Activated T-helper 2 cell treated with anti-CD3 and anti-CD28 coated beads, Interferon-gamma antibody, Interleukin-2, Interleukin-4, amounts not matched to agents 10 μg/mL and 5 μg/mL and 100 μg/mL, durations not matched to agents 14 hours and 24 hours and 36 hours (primary cell): ENCODE measurements at regions of chr2 and their contacts with region 1.

Region 1: DNA sequence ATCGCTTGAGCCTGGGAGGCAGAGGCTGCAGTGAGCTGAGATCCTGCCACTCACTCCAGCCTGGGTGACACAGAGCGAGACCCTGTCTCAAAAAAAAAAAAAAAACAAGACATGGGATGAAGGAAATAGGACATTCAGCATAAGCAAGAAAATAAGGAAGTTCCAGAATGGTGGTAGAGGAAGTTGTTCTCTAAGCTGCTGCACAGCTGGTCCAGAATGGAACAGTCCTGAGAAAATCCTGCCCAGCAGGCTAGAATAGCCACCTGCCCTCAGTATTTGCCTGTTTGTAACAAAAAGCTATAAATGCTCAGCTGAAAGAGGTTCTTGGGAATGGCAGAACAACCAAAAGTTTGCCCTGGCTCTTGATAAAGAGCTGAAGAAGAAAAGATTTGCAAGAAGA is 11.1 kb upstream of the MAPRE3 start:
- DNase-seq: no peak
- H3K4me3 Mint-ChIP-seq: no peak overlapping the region
- H3K27ac Mint-ChIP-seq: no peak overlapping the region
- H3K4me1 Mint-ChIP-seq: no peaks in the 10 kb centered on the region
- H3K27me3 Mint-ChIP-seq: peaks cover 29% of the 10 kb centered on the region

Region 2: DNA sequence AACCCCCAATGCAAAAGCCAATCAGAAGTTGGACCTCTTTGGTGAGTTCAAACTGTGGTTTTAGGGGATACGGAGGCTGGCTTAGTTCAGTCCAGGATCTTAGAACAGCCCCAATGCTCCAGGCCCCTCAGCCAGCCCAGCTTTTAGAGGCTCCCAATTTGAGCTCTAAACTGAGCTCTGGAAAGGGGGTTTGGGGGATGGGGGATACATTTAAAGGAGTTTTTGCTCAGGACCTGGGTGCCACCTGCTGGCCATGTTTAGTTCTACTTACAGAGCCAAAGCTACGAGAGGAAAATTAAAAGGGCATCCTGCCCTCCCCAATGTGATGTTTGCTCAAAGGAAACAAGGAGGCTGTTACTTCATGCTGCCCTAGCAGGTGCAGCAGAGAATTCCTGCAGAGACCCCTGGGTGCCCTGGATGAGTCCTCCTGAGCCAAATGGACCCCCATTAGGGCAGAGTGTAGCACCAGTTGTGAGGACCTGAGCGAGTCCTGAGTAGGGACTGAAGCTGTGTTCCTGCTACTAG is 57.5 kb after region 1 on chr2:
- intact Hi-C with region 1: loop called (anchors 1 kb)
- DNase-seq: peak; percentile 21
- H3K4me3 Mint-ChIP-seq: no peak overlapping the region
- H3K27ac Mint-ChIP-seq: no peak overlapping the region
- H3K4me1 Mint-ChIP-seq: peaks cover 4% of the 10 kb centered on the region
- H3K27me3 Mint-ChIP-seq: no peaks in the 10 kb centered on the region